IMR-90 (cell line): ENCODE measurements at regions of chr20 and their contacts with region 1.

Region 1: DNA sequence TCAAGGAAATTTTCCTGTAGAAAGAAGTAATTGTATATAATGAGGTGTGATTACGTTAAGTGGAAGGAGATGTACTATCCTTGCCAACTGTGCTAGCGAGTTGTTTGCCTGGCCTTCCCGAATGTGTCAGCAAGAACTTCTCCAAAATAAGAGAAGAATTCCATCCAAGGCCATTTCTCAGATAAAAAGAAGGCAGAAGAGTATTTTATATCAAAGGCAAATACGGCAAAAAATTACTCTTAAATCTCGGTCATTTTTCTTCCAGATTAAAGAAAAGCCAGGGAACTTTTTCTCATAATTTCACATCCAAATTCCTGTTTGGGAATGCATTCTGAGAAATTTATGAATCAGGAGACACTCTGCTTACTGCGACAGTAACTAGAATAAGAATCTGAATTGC is 290.6 kb downstream of the CBLN4 start:
- DNase-seq: no peak
- ATAC-seq: no peak
- H3K4me3 ChIP-seq: no peak overlapping the region
- H3K27ac ChIP-seq: no peak overlapping the region
- H3K4me1 ChIP-seq: no peaks in the 10 kb centered on the region
- H3K27me3 ChIP-seq: no peaks in the 10 kb centered on the region
- CTCF ChIP-seq: no peak
- POLR2A ChIP-seq: no peak
- RAD21 ChIP-seq: no peak

Region 2: DNA sequence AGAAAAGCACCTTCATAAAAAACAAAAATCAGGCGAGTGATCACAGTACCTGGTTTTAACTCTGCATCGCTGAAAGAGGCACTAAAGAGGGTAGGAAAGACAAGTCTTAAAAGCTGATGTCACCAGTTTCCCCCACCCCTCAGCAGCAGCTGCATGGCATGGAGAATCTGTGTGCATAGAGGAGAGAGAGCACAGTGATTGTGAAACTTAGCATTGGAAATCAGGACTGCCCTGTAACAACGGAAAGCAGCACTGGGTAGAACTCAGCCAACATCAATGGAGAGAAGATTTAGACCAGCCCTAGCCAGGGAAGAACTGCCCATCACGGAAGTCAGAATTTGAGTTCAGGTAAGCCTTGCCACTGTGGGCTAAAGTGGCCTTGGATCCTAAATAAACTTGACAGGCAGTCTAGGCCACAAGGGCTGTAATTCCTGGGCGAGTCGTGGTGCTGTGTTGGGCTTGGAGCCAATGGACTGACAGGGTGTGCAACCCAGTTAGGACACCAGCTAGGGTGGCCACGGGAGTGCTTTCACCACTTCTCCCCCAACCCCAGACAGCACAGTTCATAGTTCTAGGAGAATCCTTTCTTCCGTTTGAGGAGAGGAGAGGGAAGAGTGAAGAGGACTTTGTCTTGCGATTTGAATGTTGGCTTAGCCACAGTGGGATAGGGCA is 817.1 kb before region 1 on chr20:
- CTCF ChIA-PET with region 1: no interaction called
- POLR2A ChIA-PET with region 1: no interaction called
- dilution Hi-C with region 1: no loop called
- in situ Hi-C with region 1: no loop called
- intact Hi-C with region 1: no loop called
- DNase-seq: no peak
- ATAC-seq: no peak
- H3K4me3 ChIP-seq: no peak overlapping the region
- H3K27ac ChIP-seq: no peak overlapping the region
- H3K4me1 ChIP-seq: no peaks in the 10 kb centered on the region
- H3K27me3 ChIP-seq: no peaks in the 10 kb centered on the region
- CTCF ChIP-seq: no peak
- POLR2A ChIP-seq: no peak
- RAD21 ChIP-seq: no peak

Region 3: GRCh38 chr20:56202493-56203077 is 487.8 kb after region 1 on chr20:
- CTCF ChIA-PET with region 1: no interaction called
- POLR2A ChIA-PET with region 1: no interaction called
- dilution Hi-C with region 1: no loop called
- in situ Hi-C with region 1: no loop called
- intact Hi-C with region 1: loop called (anchors 10 kb)
- DNase-seq: no peak
- ATAC-seq: no peak
- H3K4me3 ChIP-seq: no peak overlapping the region
- H3K27ac ChIP-seq: no peak overlapping the region
- H3K4me1 ChIP-seq: no peaks in the 10 kb centered on the region
- H3K27me3 ChIP-seq: no peaks in the 10 kb centered on the region
- CTCF ChIP-seq: peak; percentile 28
- POLR2A ChIP-seq: no peak
- RAD21 ChIP-seq: peak; percentile 34; the same call in 1 of the 2 replicates